ENCODE measurements at regions of chr9 and their contacts with region 1.

Region 1: GRCh38 chr9:72856972-72857623 is 95.8 kb downstream of the ALDH1A1 start:
- DNase-seq: no peak
- H3K4me3 ChIP-seq: no peak overlapping the region
- H3K27me3 ChIP-seq: no peaks in the 10 kb centered on the region
- CTCF ChIP-seq: peak; percentile 71

Region 2: DNA sequence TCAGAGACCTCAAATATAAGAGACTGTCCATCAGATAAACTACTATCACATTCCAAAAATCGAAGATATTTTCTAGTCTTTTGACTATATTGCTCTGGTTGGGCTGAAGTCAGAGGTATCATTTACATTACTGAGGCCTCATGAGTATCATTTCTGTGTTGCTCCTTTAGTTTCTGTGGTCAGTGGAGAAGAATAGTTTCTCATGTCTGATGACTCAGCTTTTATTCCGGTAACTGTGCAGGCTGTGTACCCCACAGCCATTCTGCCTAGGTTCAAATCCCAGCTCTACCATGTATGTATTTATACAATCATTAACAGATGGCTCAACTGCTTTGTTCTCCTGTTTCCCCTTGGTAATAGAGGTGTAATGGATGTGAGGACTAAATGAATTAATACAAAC is 83.5 kb before region 1 on chr9:
- CTCF ChIA-PET with region 1: no interaction called
- POLR2A ChIA-PET with region 1: no interaction called
- DNase-seq: no peak
- H3K4me3 ChIP-seq: no peak overlapping the region
- H3K27me3 ChIP-seq: no peaks in the 10 kb centered on the region
- CTCF ChIP-seq: no peak

Region 3: GRCh38 chr9:72843520-72844439 is 13.3 kb before region 1 on chr9:
- CTCF ChIA-PET with region 1: interaction called, 11 read pairs
- POLR2A ChIA-PET with region 1: no interaction called
- DNase-seq: no peak
- H3K4me3 ChIP-seq: no peak overlapping the region
- H3K27me3 ChIP-seq: no peaks in the 10 kb centered on the region
- CTCF ChIP-seq: peak; percentile 28

Measured in BJ (cell line).